Sigmoid colon (tissue), 7 donors: ENCODE measurements at regions of chr4 and their contacts with region 1.

Region 1: GRCh38 chr4:40309250-40309774 is 25.8 kb upstream of the CHRNA9 start:
- DNase-seq: peak; percentile 89
- H3K4me3 ChIP-seq: no peak overlapping the region
- H3K27ac ChIP-seq: no peak overlapping the region
- H3K4me1 ChIP-seq: peaks cover 0 to 8% (median 0%) of the 10 kb centered on the region in 4 donors
- H3K27me3 ChIP-seq: no peaks in the 10 kb centered on the region
- CTCF ChIP-seq: peak; percentile 53 to 88 (median 76)
- EP300 ChIP-seq: no peak
- POLR2A ChIP-seq: no peak

Region 2: GRCh38 chr4:40056716-40057585 is 252.4 kb before region 1 on chr4 and contains the start of gene N4BP2:
- intact Hi-C with region 1: loop called (anchors 2 kb)
- DNase-seq: peak; percentile 89
- H3K4me3 ChIP-seq: peak within 1 kb of the TSS; percentile 76 to 88 (median 86)
- H3K27ac ChIP-seq: peak within 1 kb of the TSS; percentile 98 to 100 (median 100)
- H3K4me1 ChIP-seq: peaks cover 0 to 27% (median 21%) of the 10 kb centered on the region in 4 donors
- H3K27me3 ChIP-seq: no peaks in the 10 kb centered on the region
- CTCF ChIP-seq: peak in 3 of 4 experiments; percentile 21 to 72 (median 25)
- EP300 ChIP-seq: no peak
- POLR2A ChIP-seq: peak; percentile 70 to 73
- total RNA-seq, gene N4BP2: 7.9 to 11.9 (median 9.2) TPM

Region 3: GRCh38 chr4:40149960-40150385 is 159.3 kb before region 1 on chr4:
- intact Hi-C with region 1: loop called (anchors 2 kb)
- DNase-seq: no peak
- H3K4me3 ChIP-seq: no peak overlapping the region
- H3K27ac ChIP-seq: no peak overlapping the region
- H3K4me1 ChIP-seq: no peaks in the 10 kb centered on the region
- H3K27me3 ChIP-seq: no peaks in the 10 kb centered on the region
- CTCF ChIP-seq: peak in 3 of 4 experiments; percentile 72 to 81 (median 80)
- EP300 ChIP-seq: no peak
- POLR2A ChIP-seq: no peak

Region 4: DNA sequence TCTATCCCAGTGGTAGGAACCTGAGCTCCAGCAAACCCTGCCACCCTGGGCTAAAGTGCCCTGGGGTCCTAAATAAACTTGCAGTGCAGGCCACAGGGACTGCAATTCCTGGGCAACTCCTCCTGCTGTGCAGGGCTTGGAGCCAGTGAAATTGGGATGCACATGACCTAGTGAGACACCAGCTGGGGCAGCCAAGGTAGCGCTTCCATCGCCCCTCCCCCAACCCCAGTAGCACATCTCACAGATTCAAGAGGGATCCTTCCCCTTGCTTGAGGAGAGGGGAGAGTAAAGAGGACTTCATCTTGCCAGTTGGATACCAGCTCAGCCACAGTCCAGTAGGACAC is 70.0 kb after region 1 on chr4:
- intact Hi-C with region 1: no loop called
- DNase-seq: no peak
- H3K4me3 ChIP-seq: no peak overlapping the region
- H3K27ac ChIP-seq: no peak overlapping the region
- H3K4me1 ChIP-seq: no peaks in the 10 kb centered on the region
- H3K27me3 ChIP-seq: no peaks in the 10 kb centered on the region
- CTCF ChIP-seq: no peak
- EP300 ChIP-seq: no peak
- POLR2A ChIP-seq: no peak